Posterior vena cava (tissue), 2 donors: ENCODE measurements at regions of chr1 and their contacts with region 1.

Region 1: GRCh38 chr1:50704126-50704525 is 255.9 kb downstream of the FAF1 start:
- DNase-seq: no peak

Region 2: DNA sequence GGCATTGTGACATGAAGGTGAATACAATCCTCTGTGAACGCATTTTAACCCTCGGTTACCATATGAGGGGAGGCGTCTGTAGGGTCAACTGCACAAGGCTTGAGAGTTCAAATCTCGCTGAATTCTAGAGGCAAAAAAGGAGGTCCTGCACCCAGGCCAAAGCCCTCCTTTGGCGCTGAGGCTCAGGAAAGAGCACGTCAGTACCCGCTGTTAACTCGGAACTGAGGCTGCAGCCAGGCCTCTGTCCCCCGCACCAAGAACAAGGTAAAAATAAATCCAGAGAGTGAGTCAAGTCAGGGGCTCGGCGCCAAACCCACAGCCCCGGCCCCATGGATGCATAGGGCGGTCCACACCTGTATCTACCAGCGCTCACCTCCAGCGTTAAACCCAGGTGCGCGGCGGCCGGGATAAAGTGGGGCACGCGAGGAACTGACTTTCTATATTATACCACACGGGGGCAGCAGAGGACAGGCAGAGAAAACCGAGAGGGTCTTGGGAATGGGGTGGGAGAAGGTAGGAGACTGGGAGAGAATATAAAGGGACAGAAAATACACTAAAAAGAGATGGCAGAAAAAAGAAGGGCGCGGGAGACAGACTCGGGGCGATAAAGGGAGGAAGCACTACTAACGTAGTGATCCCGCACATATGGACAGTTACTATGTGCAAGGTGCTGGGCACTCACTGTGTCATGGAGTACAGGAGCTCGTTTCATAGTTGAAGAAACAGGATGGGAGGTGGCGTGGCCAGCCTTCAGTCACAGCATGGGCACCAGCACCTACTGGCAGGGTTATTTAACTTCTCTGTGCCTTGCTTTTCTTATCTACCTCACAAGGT is 335.7 kb before region 1 on chr1:
- intact Hi-C with region 1: loop called in 1 of 2 experiments (anchors 10 kb)
- DNase-seq: no peak